Head of caudate nucleus (tissue), 42 donors: ENCODE measurements at regions of chr6 and their contacts with region 1.

Region 1: GRCh38 chr6:3825851-3826581 is 23.2 kb upstream of the FAM50B start:
- DNase-seq: peak in 32 of 42 donors; percentile 22 to 73 (median 51)

Region 2: GRCh38 chr6:3455147-3455568 is 370.9 kb before region 1 on chr6:
- intact Hi-C with region 1: no loop called
- DNase-seq: peak in 35 of 42 donors; percentile 27 to 80 (median 51)

Region 3: DNA sequence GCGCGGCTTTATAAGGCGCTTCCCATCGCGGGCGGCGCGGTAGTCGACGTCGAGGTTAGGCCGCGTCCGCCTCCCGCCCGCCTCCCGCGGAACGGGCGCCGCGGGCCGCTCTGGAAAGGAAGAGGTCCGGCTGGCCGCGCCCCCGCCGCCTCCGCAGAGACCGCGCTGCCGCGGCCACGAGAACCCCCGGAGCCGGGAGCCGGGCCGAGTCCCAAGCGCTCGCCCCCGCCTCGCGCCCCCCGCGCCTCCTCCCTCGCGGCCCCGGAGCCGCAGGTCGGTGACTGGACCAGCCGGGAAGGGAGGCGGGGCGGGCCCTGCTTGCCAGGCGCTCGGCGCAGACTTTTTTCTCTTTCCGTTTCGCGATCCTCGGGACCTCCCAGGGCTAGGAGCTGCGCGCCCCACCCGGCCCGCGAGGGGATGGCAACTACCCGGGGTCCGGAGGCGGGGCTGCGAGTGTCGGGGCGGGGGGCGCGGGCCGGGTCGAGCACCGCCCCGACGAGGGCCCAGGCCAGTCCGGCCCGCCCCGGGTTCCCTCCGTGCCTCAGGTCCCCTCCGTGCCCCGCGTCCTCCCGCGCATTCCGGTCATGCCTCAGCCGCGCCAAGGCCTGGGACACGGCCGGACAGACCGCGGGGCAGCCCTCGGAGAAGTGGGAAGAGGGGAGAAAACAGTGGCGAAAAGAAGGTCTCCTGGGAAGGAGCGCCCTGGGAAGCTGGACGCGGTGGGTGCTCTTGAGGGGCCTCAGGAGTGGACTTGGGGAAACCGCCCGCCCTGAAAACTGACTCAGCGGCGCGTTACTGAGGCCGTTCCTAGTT is 74.1 kb before region 1 on chr6:
- intact Hi-C with region 1: loop called (anchors 10 kb)
- DNase-seq: peak; percentile 48 to 92 (median 76)

Region 4: GRCh38 chr6:3857468-3858456 is 31.7 kb after region 1 on chr6:
- intact Hi-C with region 1: no loop called
- DNase-seq: peak in 2 of 42 donors; percentile 26 to 29